ENCODE measurements at regions of chr2 and their contacts with region 1.

Region 1: DNA sequence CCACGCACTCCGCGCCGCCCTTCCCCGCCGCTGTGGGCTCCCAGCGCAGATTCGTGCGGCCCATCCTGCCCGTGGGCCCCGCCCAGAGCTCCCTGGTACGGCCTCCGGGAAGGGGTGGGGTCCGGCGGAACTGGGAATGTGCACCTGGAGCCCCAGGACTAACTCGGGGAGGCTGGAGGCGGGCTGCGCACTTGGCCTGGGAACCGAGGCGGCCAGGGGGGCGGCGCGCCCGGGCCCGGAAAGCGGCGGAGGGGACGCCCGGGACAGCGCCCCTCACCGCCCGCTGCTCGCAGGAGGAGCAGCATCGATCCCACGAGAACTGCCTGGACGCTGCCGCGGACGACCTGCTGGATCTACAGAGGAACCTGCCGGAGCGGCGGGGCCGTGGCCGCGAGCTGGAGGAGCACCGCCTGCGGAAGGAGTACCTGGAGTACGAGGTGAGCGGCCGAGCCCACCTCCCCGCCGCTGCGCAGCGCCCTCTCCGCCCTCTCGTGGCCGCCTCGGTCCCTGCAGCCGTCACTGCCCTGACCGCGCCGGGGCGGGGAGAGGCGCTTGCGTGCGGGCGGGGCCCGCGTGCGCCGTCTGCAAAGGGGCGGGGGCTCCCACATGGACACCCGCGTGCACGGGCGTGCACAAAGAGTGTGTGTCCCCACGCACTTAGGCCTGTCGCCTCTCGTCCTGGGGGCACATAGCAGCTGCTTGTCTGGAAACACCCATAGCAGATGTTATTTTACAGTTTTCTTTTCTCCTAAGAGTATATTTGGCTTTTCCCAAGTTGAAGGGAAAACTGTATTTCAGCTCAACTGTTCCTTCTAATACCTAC is 25.2 kb downstream of the PSD4 start:
- DNase-seq: peak; percentile 89
- H3K4me3 ChIP-seq: peak overlapping the region; percentile 59 to 69 (median 65)
- H3K27ac ChIP-seq: peak overlapping the region; percentile 73
- H3K4me1 ChIP-seq: peaks cover 39% of the 10 kb centered on the region
- H3K27me3 ChIP-seq: no peaks in the 10 kb centered on the region
- CTCF ChIP-seq: peak; percentile 70 to 85

Region 2: GRCh38 chr2:113041871-113042508 is 157.0 kb before region 1 on chr2:
- CTCF ChIA-PET with region 1: no interaction called
- dilution Hi-C with region 1: no loop called
- in situ Hi-C with region 1: no loop called
- intact Hi-C with region 1: loop called (anchors 1 kb)
- DNase-seq: peak; percentile 33
- H3K4me3 ChIP-seq: no peak overlapping the region
- H3K27ac ChIP-seq: no peak overlapping the region
- H3K4me1 ChIP-seq: no peaks in the 10 kb centered on the region
- H3K27me3 ChIP-seq: no peaks in the 10 kb centered on the region
- CTCF ChIP-seq: peak; percentile 61 to 83

Region 3: GRCh38 chr2:113080134-113080533 is 118.9 kb before region 1 on chr2:
- CTCF ChIA-PET with region 1: interaction called, 18 read pairs
- dilution Hi-C with region 1: no loop called
- in situ Hi-C with region 1: loop called in 1 of 2 experiments (anchors 5 kb)
- intact Hi-C with region 1: loop called (anchors 1 kb)
- DNase-seq: peak; percentile 47
- H3K4me3 ChIP-seq: no peak overlapping the region
- H3K27ac ChIP-seq: no peak overlapping the region
- H3K4me1 ChIP-seq: peaks cover 48% of the 10 kb centered on the region
- H3K27me3 ChIP-seq: no peaks in the 10 kb centered on the region
- CTCF ChIP-seq: peak; percentile 92 to 94

Region 4: GRCh38 chr2:113085542-113085941 is 113.5 kb before region 1 on chr2:
- CTCF ChIA-PET with region 1: interaction called, 18 read pairs
- dilution Hi-C with region 1: no loop called
- in situ Hi-C with region 1: loop called in 1 of 2 experiments (anchors 5 kb)
- intact Hi-C with region 1: loop called (anchors 1 kb)
- DNase-seq: peak; percentile 92
- H3K4me3 ChIP-seq: no peak overlapping the region
- H3K27ac ChIP-seq: peak overlapping the region; percentile 59
- H3K4me1 ChIP-seq: peaks cover 22% of the 10 kb centered on the region
- H3K27me3 ChIP-seq: no peaks in the 10 kb centered on the region
- CTCF ChIP-seq: peak in 1 of 2 donors; percentile 19

Region 5: DNA sequence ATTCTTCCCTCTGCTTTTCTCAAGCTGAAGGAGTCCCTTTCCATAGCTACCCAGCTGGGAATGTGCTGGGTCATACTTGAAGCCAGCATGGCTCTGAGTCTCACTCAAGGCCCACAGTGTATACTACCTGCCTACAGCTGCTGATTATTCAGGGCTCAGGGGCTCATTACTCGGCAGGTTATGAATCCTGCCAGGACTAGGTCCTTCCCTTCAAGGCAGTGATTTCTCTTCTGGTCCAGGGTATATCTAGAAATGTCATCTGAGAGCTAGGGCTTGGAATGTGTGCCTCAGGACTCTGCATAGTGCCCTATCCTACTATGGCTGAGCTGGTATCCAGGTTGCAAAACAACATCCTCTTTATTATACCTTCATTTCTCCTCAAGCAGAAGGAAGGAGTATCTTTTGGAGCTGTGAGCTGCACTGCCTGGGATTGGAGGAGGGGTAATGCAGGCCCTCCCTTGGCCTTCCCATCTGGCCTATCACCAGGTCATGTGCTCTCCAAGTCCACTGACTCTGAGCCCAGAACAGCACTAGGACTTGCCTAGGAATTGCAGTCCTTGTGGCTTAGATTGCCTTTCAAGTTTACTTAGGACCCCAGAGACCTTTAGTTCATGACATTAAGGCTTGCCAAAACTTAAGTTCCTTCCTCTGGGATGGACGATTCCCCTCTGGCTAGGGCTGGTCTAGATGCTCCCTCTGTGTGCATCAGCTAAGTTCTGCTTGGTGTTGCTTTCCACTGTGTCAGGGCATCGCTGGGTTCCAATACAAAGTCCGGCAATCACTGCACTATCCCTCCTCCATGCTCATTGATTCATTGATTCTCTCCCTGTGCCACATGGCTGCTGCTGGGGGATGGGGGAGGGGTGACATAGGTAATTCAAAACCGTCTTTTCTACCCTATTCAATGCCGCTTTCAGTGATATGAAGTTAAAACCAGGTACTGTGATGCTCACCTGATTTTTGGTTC is 49.1 kb before region 1 on chr2:
- CTCF ChIA-PET with region 1: no interaction called
- dilution Hi-C with region 1: no loop called
- in situ Hi-C with region 1: loop called in 1 of 2 experiments (anchors 5 kb)
- intact Hi-C with region 1: no loop called
- DNase-seq: no peak
- H3K4me3 ChIP-seq: no peak overlapping the region
- H3K27ac ChIP-seq: no peak overlapping the region
- H3K4me1 ChIP-seq: peaks cover 26% of the 10 kb centered on the region
- H3K27me3 ChIP-seq: no peaks in the 10 kb centered on the region
- CTCF ChIP-seq: no peak

Region 6: DNA sequence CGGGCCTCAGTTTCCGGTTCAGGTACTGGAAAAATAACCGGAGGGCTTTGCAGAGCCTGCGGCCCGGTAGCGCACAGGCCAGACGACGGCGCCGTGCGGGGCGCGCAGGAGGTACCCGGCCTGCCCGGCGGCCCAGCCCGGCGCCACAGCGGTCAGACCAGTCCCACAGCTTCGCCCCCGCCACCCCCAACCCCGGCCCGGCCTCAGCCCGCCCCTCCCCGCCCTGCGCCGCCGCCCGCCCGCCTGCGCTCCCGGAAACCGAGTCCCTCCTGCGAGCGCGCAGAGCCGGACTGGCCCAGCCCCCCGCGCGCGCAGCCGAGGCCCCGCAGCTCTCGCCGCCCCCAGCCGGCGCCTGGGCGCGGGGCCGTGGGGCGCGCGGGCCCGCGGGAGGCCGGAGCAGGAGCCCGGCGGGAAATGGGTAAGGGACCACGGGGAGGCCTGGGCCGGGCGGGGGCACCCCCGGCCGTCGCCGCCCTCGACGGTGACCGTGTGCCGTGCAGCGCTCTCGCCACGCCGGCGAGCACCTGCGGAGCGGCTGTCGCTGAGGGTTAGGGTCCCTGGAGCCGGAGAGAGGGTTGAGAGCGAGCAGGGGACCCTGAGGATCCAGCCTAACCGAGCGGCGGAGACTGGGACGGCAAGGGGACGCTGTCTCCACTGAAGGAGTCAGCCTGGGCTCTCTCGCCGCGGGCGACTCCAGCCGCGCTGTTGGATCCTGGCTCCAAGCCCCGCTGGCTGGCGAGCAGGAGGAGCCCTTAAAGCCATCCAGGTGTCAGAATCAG is 41.7 kb before region 1 on chr2:
- CTCF ChIA-PET with region 1: no interaction called
- dilution Hi-C with region 1: no loop called
- in situ Hi-C with region 1: loop called in 1 of 2 experiments (anchors 5 kb)
- intact Hi-C with region 1: loop called (anchors 2 kb)
- DNase-seq: peak; percentile 55
- H3K4me3 ChIP-seq: peak overlapping the region; percentile 52 to 76 (median 62)
- H3K27ac ChIP-seq: peak overlapping the region; percentile 79
- H3K4me1 ChIP-seq: peaks cover 28% of the 10 kb centered on the region
- H3K27me3 ChIP-seq: no peaks in the 10 kb centered on the region
- CTCF ChIP-seq: no peak

Region 7: DNA sequence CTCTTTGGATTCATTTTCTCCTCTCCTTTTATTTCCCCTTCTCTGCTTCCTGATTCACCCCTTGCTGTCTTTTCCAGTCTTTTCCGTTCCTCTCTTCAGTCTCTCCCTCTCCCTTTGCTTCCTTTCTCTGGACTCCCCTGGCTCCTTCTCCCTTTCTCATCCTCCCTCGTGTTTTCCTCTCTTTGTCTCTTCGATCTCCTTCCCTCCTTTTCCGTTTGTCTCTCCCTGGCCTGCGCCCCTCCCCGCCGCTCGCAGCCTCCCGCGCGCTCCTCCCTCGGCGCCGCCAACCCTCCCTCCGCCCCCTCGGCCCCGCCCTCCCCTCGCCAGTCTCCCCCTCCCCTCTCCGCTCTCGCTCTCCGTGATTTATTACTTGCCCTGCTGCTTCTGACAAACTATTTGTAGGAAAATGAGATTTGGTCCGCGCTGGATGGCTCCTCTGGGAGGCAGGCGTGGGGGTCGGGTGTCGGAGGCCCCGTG is 125.7 kb after region 1 on chr2:
- CTCF ChIA-PET with region 1: no interaction called
- dilution Hi-C with region 1: no loop called
- in situ Hi-C with region 1: no loop called
- intact Hi-C with region 1: loop called (anchors 5 kb)
- DNase-seq: peak; percentile 65
- H3K4me3 ChIP-seq: peak overlapping the region; percentile 56 to 86 (median 67)
- H3K27ac ChIP-seq: peak overlapping the region; percentile 86
- H3K4me1 ChIP-seq: peaks cover 45% of the 10 kb centered on the region
- H3K27me3 ChIP-seq: no peaks in the 10 kb centered on the region
- CTCF ChIP-seq: no peak

Measured in mammary epithelial cell (primary cell).